OCI-LY7 (cell line): ENCODE measurements at regions of chr10 and their contacts with region 1.

Region 1: GRCh38 chr10:92573798-92574547 is at the start of gene IDE:
- DNase-seq: peak; percentile 89
- H3K4me3 ChIP-seq: peak within 1 kb of the TSS; percentile 95
- H3K27ac ChIP-seq: peak within 1 kb of the TSS; percentile 68
- H3K4me1 ChIP-seq: peaks cover 29% of the 10 kb centered on the region
- CTCF ChIP-seq: peak; percentile 83
- total RNA-seq, gene IDE: 14.2 and 14.3 TPM in 2 replicates

Region 2: GRCh38 chr10:92517034-92517655 is 56.8 kb before region 1 on chr10:
- CTCF ChIA-PET with region 1: interaction called, 5 read pairs
- POLR2A ChIA-PET with region 1: no interaction called
- intact Hi-C with region 1: loop called (anchors 1 kb)
- DNase-seq: peak; percentile 85
- H3K4me3 ChIP-seq: no peak overlapping the region
- H3K27ac ChIP-seq: no peak overlapping the region
- H3K4me1 ChIP-seq: no peaks in the 10 kb centered on the region
- CTCF ChIP-seq: peak; percentile 99